Heart left ventricle (tissue), 16 donors: ENCODE measurements at regions of chr17 and their contacts with region 1.

Region 1: DNA sequence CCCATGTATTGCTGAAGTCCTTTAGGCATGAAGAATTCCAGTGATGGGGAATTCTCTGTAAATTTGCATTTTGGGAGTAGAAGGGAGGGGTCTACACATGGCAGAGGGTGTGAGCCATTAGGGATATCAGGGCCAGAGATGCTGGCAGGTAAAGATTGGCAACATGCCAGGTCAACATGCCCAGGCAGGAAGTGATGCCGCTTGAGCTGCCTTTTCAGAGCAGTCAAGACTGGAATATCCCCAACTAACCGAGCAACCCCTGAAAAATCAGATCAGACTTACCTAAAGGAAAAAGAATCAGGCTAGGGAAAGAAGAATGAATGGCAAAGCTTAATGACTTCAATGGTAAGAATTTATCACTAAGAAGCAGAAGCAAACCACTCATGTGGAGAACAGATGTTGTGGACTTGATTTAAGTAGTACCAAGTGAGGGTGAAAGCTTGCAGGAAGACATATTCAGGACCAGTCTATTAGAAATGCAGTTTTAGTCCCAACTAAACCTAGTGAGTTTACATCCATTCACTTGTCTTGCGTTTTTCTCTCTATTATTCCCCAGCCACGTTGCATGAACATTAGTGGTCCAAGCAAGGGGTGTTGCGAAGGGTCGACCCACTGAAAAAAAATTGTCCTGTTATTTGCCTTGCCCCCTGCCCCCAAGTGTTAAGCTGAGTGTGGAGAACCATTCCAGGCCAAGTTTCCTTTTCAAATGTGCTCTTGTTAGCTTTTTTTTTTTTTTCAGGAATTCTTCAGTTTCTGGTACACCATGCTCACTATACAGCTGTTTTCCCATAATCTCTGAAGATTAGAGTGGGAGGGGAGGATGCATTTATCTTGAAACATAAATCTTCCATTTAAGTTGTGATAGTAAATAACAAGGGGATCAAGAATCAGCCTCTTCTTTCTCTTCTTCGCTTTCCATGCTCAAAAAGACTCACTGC is 105.2 kb downstream of the ABCA8 start:
- DNase-seq: no peak
- ATAC-seq: no peak
- H3K4me3 ChIP-seq: no peak overlapping the region
- H3K27ac ChIP-seq: peak overlapping the region in 5 of 12 donors; percentile 51 to 78 (median 64)
- H3K4me1 ChIP-seq: peaks cover 0 to 31% (median 0%) of the 10 kb centered on the region in 12 donors
- H3K27me3 ChIP-seq: no peaks in the 10 kb centered on the region
- CTCF ChIP-seq: no peak
- POLR2A ChIP-seq: no peak

Region 2: DNA sequence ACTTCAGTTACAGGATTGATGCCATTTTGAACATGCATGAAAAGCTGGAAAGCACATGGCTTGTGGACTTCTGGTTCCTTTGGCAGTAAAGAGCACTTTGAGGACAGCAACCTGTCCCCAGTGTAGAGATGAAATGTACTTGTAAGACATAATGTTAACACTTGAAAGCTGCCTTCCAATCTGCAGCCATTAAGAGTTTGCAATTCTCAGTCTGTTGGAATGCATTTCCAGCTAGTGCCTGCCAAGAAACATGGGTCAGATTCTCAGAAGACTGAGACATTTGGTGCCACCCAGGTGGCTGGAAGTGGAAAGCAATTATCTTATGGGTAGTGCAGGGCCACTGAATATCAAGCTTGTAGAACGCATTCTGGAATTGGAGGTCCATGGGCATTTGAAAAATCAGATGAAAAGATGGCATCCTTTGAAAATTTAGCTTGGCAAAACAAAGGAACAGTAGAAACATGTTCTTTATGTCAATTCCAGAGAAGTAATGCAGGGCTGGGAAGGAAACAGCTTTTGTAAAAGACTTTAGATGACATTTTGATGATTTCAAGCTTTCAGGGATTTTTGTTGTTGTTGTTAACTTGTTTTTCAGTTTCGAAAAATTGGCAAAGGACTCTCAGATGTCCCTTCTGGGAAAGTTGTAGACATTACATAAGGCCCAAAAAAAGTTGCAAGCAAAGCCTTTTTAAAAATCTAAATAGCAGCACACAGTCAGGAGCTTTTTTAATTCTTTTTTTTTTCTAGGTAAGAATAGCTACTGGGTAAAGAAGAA is 41.8 kb before region 1 on chr17:
- intact Hi-C with region 1: loop called in 2 of 10 experiments (anchors 1 to 5 kb)
- DNase-seq: no peak
- ATAC-seq: peak; percentile 39 to 75 (median 53)
- H3K4me3 ChIP-seq: no peak overlapping the region
- H3K27ac ChIP-seq: peak overlapping the region in 8 of 12 donors; percentile 17 to 79 (median 58)
- H3K4me1 ChIP-seq: peaks cover 0 to 35% (median 5%) of the 10 kb centered on the region in 12 donors
- H3K27me3 ChIP-seq: no peaks in the 10 kb centered on the region
- CTCF ChIP-seq: no peak
- POLR2A ChIP-seq: no peak

Region 3: DNA sequence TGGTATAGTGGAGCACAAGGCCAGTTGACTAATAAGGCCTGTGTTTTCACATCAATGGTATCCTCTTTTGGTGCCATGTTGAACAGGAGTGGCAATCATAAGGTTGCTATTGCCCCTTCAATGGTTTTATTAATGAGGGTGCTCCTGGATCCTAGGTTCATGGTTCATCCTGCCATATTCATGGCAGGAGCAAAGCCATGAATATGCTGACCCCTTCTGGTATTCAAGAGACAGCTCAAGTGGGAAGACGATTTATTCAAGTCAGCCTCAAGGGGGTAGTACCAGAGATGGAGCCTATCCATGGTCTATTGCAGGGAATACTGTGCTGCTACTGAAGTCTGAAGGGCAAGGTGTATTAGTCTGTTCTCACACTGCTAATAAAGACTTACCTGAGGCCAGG is 208.2 kb after region 1 on chr17:
- intact Hi-C with region 1: no loop called
- DNase-seq: no peak
- ATAC-seq: no peak
- H3K4me3 ChIP-seq: no peak overlapping the region
- H3K27ac ChIP-seq: peak overlapping the region in 1 of 12 donors; percentile 82
- H3K4me1 ChIP-seq: peaks cover 0 to 25% (median 0%) of the 10 kb centered on the region in 12 donors
- H3K27me3 ChIP-seq: no peaks in the 10 kb centered on the region
- CTCF ChIP-seq: no peak
- POLR2A ChIP-seq: no peak